ENCODE measurements at regions of chr19 and their contacts with region 1.

Region 1: GRCh38 chr19:18058208-18059030 is 28.3 kb downstream of the IL12RB1 start:
- DNase-seq: peak; percentile 65
- ATAC-seq: peak; percentile 95
- H3K4me3 ChIP-seq: no peak overlapping the region
- H3K27ac ChIP-seq: peak overlapping the region; percentile 10
- H3K4me1 ChIP-seq: peaks cover 7% of the 10 kb centered on the region; the same call in 1 of the 2 replicates
- H3K27me3 ChIP-seq: peaks cover 9% of the 10 kb centered on the region; the same call in 1 of the 2 replicates
- CTCF ChIP-seq: peak; percentile 88
- POLR2A ChIP-seq: peak; percentile 53; the same call in 1 of the 2 replicates
- RAD21 ChIP-seq: peak; percentile 95

Region 2: DNA sequence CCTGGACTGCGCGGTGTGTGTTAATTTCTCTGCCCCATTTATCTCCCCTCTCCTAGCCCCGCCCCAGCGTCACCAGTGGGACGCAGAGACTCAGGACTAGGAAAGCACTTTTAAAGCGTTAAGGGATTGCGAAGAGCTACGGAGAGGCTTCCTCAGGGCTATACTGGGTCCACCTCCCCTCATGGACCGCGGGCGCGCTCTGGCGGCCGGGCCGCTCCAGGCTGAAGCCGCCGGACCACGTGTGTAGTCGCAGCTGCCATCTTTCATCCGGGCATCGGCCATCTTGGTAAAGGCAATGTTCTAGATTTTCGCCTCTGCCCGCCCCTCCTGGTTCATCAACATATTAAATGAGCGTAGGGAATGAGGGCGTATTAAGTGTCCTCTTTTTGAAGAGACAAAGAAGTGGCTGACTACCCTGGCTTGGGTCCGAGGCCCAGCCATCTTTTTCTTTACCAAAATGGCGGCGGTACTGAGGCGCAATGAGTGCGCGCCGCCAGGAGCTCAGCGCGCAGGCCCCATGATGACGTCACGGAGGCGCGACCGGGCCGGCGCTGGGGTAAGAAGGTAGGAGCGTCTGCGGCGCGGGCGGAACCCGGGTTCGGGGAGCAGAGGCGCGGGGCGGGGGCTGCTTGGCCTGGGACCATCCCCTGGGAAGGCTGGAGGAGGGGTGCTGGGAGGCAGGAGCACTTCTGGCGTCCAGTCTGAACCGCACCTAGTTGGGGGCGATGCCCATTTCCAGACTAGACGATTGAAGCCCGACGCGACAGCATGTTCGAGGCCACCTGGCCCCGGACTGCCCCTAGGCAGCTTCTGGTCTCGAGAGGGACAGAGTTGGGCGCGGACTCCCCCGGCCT is 125.7 kb before region 1 on chr19 and contains the start of gene CCDC124:
- CTCF ChIA-PET with region 1: no interaction called
- POLR2A ChIA-PET with region 1: no interaction called
- dilution Hi-C with region 1: no loop called
- in situ Hi-C with region 1: loop called (anchors 25 kb)
- intact Hi-C with region 1: loop called (anchors 5 kb)
- DNase-seq: peak; percentile 89
- ATAC-seq: peak; percentile 99
- H3K4me3 ChIP-seq: peak within 1 kb of the TSS; percentile 70
- H3K27ac ChIP-seq: peak within 1 kb of the TSS; percentile 87
- H3K4me1 ChIP-seq: peaks cover 3% of the 10 kb centered on the region; the same call in 1 of the 2 replicates
- H3K27me3 ChIP-seq: peaks cover 2% of the 10 kb centered on the region; the same call in 1 of the 2 replicates
- CTCF ChIP-seq: peak; percentile 99
- POLR2A ChIP-seq: peak; percentile 35; the same call in 1 of the 2 replicates
- RAD21 ChIP-seq: peak; percentile 94
- total RNA-seq, gene CCDC124: 29.4 and 30.1 TPM in 2 replicates

Region 3: DNA sequence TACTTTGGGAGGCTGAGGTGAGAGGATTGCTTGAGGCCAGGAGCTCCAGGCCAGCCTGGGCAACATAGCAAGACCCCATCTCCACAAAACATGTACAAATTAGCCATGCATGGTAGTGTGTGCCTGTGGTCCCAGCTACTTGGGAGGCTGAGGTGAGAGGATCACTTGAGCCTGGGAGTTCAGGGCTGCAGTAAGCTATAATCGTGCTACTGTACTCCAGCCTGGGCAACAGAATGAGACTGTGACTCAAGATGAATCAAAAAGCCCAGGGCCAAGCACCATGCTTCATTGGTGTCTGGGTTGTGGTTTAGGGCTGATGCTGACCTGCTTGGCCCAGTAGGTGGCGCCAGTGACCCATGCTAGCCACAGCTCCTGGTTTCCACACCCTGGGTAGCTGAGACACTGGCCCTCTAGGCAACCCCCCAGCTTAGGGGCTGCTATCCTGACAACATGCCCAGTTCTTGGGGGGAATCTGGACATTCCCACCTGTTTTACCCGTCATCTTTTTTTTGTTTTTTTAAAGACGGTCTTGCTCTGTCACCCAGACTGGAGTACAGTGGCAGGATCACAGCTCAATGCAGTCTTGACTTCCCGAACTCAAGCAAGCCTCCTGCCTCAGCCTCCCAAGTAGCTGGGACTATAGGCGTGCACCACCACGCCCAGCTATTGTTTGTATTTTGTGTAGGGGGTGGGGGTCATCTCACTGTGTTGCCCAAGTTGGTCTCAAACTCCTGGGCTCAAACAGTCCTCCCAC is 120.2 kb before region 1 on chr19:
- CTCF ChIA-PET with region 1: no interaction called
- POLR2A ChIA-PET with region 1: no interaction called
- dilution Hi-C with region 1: no loop called
- in situ Hi-C with region 1: loop called (anchors 25 kb)
- intact Hi-C with region 1: loop called (anchors 5 kb)
- DNase-seq: peak; percentile 88
- ATAC-seq: peak; percentile 99
- H3K4me3 ChIP-seq: no peak overlapping the region
- H3K27ac ChIP-seq: no peak overlapping the region
- H3K4me1 ChIP-seq: 0 out of 2 replicates have a peak, but pooled peaks cover 3% of the 10 kb centered on the region
- H3K27me3 ChIP-seq: no peaks in the 10 kb centered on the region
- CTCF ChIP-seq: peak; percentile 98
- POLR2A ChIP-seq: 0 out of 2 replicates have a peak, but pooled peaks have one; percentile 43
- RAD21 ChIP-seq: peak; percentile 97

Region 4: GRCh38 chr19:17957149-17957849 is 101.1 kb before region 1 on chr19:
- CTCF ChIA-PET with region 1: no interaction called
- POLR2A ChIA-PET with region 1: no interaction called
- dilution Hi-C with region 1: no loop called
- in situ Hi-C with region 1: no loop called
- intact Hi-C with region 1: no loop called
- DNase-seq: no peak
- ATAC-seq: no peak
- H3K4me3 ChIP-seq: no peak overlapping the region
- H3K27ac ChIP-seq: no peak overlapping the region
- H3K4me1 ChIP-seq: no peaks in the 10 kb centered on the region
- H3K27me3 ChIP-seq: peaks cover 52% of the 10 kb centered on the region
- CTCF ChIP-seq: no peak
- POLR2A ChIP-seq: no peak
- RAD21 ChIP-seq: no peak

Region 5: GRCh38 chr19:18007044-18007916 is 51.1 kb before region 1 on chr19:
- CTCF ChIA-PET with region 1: interaction called, 10 read pairs
- POLR2A ChIA-PET with region 1: interaction called, 5 read pairs
- dilution Hi-C with region 1: no loop called
- in situ Hi-C with region 1: no loop called
- intact Hi-C with region 1: loop called (anchors 1 kb)
- DNase-seq: peak; percentile 62
- ATAC-seq: peak; percentile 84
- H3K4me3 ChIP-seq: peak overlapping the region; percentile 41
- H3K27ac ChIP-seq: no peak overlapping the region
- H3K4me1 ChIP-seq: peaks cover 8% of the 10 kb centered on the region
- H3K27me3 ChIP-seq: no peaks in the 10 kb centered on the region
- CTCF ChIP-seq: peak; percentile 99
- POLR2A ChIP-seq: peak; percentile 54; the same call in 1 of the 2 replicates
- RAD21 ChIP-seq: peak; percentile 99

Region 6: DNA sequence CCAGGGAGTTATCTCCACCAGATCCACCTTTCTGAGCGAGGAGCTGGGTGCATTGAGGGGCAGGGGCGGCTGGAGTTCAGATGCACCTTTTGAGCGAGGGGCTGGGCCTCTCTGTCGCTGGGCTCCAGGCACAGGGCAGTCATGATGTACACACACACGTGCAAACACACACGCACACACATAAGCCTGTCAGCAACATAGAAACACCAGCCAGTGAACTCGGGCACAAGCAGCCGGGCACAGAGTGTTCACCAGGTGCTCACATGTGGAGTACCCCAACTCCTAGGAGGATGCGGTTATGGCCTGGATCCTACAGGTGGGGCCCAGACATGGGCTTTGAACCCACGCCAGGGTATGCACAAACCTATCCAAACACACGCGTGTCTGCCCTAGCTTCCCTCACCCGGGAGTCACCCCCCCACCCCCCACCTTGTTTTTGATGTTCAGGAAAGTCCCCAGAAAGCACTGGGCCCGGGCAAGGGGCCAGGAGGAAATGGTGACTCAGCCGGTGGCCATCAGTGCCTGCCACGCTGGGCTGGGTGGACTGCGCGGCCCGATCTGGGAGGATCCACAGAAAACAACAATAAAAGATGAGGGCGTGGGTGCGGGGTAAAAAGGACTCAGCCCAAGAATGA is 37.2 kb before region 1 on chr19:
- CTCF ChIA-PET with region 1: no interaction called
- POLR2A ChIA-PET with region 1: no interaction called
- dilution Hi-C with region 1: no loop called
- in situ Hi-C with region 1: loop called (anchors 5 kb)
- intact Hi-C with region 1: no loop called
- DNase-seq: peak; percentile 88
- ATAC-seq: peak; percentile 78
- H3K4me3 ChIP-seq: no peak overlapping the region
- H3K27ac ChIP-seq: peak overlapping the region; percentile 84
- H3K4me1 ChIP-seq: peaks cover 17% of the 10 kb centered on the region
- H3K27me3 ChIP-seq: no peaks in the 10 kb centered on the region
- CTCF ChIP-seq: no peak
- POLR2A ChIP-seq: 0 out of 2 replicates have a peak, but pooled peaks have one; percentile 18
- RAD21 ChIP-seq: no peak

Region 7: DNA sequence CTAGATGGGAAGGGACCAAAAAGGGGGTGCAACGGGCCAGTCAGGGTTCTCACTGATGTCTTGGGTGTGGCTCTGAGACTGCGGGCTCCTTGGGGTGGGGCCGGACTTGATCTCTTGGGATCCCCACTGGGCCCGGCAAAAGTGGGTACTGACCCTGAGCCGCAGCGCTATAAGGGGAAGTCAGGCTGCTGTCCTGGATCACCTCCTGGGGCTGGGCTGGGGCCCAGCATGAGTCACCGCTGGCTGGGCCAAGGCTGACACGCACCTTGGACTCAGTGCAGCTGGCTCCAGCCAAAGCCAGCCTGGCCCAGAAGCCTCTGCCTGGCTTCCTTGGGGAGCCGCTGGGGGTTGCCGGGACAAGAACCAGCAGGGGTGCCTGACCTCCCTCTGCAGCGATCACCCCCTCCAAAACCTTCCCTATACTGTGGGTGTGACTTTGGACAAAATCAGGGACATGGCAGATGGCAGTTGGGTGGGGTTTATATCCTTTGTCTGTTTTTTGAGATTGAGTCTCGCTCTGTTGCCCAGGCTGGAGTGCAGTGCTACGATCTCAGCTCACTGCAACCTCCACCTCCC is 216.4 kb after region 1 on chr19:
- CTCF ChIA-PET with region 1: no interaction called
- POLR2A ChIA-PET with region 1: no interaction called
- dilution Hi-C with region 1: no loop called
- in situ Hi-C with region 1: no loop called
- intact Hi-C with region 1: no loop called
- DNase-seq: peak; percentile 89
- ATAC-seq: peak; percentile 76
- H3K4me3 ChIP-seq: no peak overlapping the region
- H3K27ac ChIP-seq: peak overlapping the region; percentile 58
- H3K4me1 ChIP-seq: peaks cover 20% of the 10 kb centered on the region
- H3K27me3 ChIP-seq: no peaks in the 10 kb centered on the region
- CTCF ChIP-seq: 0 out of 2 replicates have a peak, but pooled peaks have one; percentile 3
- POLR2A ChIP-seq: peak; percentile 85
- RAD21 ChIP-seq: peak; percentile 15; the same call in 1 of the 2 replicates